Gastrocnemius medialis (tissue), 4 donors: ENCODE measurements at regions of chr5 and their contacts with region 1.

Region 1: DNA sequence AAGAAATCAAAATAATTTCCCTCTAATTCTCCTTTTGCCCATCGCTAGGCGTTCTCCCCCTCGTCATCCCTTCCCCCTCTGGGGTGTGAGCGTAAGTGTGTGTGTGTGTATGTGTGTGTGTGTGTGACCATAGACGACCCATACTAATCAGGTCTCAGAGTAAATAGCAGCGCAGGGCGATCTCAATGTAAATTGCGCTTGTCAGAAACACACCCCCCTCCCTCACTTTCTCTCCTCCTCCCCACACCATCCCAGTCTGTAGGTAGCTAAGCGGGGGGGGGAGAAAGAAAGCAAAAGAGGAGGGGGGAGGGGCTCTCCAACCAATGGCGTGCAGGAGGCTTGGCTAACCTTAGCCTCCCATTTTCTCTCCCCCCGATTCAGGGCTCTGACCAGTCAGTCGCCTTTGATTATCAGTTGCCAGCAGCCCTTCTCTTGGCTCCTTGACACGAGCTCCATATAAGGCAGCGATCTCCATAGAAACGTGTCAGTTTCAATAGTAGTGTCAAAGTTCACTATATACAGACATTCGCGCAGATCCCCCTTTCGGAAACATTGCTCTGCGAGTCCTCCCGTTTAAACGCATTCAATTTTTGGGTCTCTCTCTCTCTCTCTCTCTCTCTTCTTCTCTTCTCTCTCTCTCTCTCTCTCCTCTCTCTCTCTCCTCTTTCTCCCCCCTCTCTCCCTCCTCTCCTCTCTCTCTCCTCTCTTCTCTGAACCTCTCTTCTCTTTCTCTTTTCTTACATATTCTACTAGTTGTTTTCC is at the start of gene NR2F1:
- DNase-seq: no peak
- ATAC-seq: no peak
- H3K4me3 ChIP-seq: peak within 1 kb of the TSS; percentile 40 to 69 (median 52)
- H3K27ac ChIP-seq: no peak within 1 kb of the TSS
- H3K4me1 ChIP-seq: peaks cover 26 to 37% of the 10 kb centered on the region in 2 donors
- H3K27me3 ChIP-seq: peaks cover 79 to 85% (median 81%) of the 10 kb centered on the region in 3 donors
- CTCF ChIP-seq: peak in 2 of 5 experiments; percentile 59 to 66
- POLR2A ChIP-seq: no peak
- total RNA-seq, gene NR2F1: 0.36 to 0.55 TPM in 2 of 4 donors, not detected in the others

Region 2: DNA sequence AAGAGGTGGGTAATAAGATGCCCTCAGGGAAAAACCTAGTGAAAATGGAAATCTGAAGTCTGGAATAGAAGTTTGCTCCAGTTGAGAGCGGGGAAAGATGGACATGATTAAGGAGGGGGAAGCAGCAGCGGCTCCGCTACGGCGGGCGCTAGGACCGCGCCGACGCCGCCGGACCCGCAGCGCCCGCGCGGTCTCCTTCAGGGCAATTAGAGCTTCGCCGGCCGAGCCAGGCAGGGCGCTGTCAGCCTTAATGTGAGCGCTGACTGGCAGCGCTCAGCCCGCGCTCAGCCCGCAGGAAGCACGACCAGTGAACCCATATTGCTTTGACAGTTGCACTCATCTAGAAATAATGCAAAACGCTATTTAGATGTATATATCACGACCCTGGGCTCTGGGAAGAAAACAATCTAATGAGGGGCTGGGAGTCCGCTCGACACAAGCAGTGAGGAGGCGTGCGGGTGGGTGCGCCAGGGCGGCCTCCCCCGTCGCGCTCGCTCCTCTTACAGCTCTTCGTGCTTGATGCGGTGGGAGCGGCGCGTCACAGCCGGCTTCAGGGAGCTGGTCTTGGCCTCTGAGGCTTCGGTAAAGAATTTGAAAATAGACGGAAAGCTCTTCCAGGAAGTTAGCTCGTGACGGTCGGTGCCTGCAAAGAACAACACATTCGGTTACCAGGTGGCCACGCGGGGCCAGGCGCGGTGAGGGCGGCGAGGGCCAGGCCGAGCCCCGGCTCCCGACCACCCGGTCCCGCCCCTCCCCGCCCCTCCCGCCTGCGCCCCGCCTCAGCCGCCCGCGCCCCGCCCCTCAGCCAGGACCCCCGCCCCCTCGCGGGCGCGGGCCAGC is 37.8 kb after region 1 on chr5:
- in situ Hi-C with region 1: no loop called
- intact Hi-C with region 1: loop called (anchors 5 kb)
- DNase-seq: no peak
- ATAC-seq: peak; percentile 75 to 79
- H3K4me3 ChIP-seq: peak overlapping the region; percentile 71 to 81 (median 74)
- H3K27ac ChIP-seq: peak overlapping the region; percentile 58 to 63 (median 60)
- H3K4me1 ChIP-seq: peaks cover 0 to 10% of the 10 kb centered on the region in 2 donors
- H3K27me3 ChIP-seq: peaks cover 0 to 6% (median 6%) of the 10 kb centered on the region in 3 donors
- CTCF ChIP-seq: no peak
- POLR2A ChIP-seq: no peak

Region 3: DNA sequence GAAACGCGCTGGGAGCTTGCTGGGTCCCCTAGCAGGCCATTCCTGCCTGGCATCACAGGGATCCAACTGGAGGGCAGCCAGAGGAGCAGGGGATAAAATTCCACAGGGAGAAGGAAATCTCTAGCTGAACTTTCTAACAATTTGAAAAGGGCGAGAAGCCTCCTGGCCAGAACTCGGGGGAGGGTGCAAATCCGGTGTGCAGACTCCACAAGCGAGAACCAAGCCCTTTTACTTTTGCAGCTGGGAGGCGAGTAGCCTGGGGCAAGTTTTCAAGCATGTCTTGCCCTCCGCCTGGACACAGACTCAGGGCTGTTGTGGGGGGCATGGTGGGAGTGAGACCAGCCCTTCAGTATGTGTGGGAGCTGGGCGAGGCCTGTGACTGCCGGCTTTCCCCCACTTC is 172.9 kb after region 1 on chr5:
- in situ Hi-C with region 1: no loop called
- intact Hi-C with region 1: no loop called
- DNase-seq: no peak
- ATAC-seq: no peak
- H3K4me3 ChIP-seq: no peak overlapping the region
- H3K27ac ChIP-seq: no peak overlapping the region
- H3K4me1 ChIP-seq: no peaks in the 10 kb centered on the region
- H3K27me3 ChIP-seq: no peaks in the 10 kb centered on the region
- CTCF ChIP-seq: no peak
- POLR2A ChIP-seq: no peak

Region 4: DNA sequence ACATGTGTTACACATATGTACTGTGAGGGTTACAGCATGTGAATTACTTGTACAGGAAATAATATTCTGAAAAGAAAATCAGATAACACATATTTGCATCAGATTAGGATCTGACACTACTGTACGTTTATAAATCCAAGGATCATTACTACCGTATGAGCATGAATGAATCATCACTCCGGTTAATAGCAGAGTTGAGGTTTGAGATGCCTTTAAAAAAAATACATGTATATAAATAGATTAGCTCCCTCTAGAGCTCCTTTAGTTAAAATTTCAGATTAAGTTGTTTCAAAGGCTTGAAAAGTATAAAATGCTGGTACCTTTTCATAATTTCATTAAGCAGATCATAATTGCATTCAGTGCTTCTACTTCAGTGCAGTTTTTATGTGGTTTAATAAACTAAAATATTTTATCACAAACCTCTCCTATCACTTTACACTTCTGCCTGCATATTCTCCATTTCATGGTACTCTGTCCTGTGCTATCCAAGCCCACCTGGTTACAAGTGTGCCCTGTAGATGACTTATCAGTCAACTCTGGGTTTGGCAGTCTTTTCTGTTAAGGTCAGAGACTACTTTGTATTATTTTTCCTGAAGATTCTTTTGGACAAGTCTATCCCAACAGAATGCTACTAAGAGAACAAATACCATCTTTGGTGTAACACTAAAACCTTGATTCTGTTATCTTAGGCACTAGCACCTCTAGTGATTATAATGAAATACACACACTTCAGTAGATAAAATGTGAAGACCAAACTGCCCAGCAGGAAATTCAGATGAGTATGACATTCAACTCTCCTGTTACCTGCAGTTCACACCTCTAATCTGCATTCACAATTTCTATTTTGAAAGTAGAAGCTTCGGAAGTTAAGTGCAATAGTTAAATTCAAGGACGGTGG is 206.6 kb after region 1 on chr5:
- in situ Hi-C with region 1: loop called in 1 of 4 experiments (anchors 25 kb)
- intact Hi-C with region 1: no loop called
- DNase-seq: no peak
- ATAC-seq: no peak
- H3K4me3 ChIP-seq: no peak overlapping the region
- H3K27ac ChIP-seq: no peak overlapping the region
- H3K4me1 ChIP-seq: no peaks in the 10 kb centered on the region
- H3K27me3 ChIP-seq: no peaks in the 10 kb centered on the region
- CTCF ChIP-seq: no peak
- POLR2A ChIP-seq: no peak

Region 5: DNA sequence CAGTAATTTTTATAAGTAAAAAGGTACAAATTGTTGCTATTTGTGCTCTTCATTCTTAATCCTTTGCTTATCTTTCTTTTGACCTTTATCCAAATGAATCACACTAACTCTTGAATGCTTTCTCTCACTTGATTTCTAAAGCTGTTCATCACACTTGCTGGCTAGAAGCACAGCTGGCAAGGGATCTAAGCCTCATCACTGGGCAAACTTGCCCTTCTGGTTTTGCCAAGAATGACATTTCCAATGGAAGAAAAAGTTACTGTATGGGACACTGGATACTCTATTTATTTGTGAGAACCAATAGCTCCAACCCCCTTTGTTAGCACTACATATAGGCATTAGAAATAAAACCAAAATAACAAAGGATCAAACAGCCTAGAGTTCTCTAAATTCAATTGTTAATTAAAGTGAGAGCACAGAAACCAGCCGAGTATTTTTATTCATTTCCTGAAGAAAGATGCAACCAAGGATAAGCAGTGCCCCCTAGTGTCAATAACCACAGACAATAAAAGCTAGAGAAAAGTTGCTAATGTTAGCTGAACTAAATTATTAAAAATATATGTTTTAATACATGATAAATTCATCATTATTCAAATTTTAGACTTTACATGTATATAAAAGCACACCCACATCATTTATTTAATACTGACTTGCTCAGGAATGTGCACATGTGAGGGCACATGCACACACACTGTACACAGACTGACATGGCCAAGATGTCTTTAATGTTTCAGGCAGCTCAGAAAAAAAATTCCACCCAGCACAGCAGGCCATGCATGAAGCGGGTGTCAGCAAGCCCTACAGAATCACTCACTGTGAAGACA is 218.3 kb after region 1 on chr5:
- in situ Hi-C with region 1: loop called in 1 of 4 experiments (anchors 25 kb)
- intact Hi-C with region 1: loop called (anchors 1 kb)
- DNase-seq: no peak
- ATAC-seq: no peak
- H3K4me3 ChIP-seq: no peak overlapping the region
- H3K27ac ChIP-seq: no peak overlapping the region
- H3K4me1 ChIP-seq: no peaks in the 10 kb centered on the region
- H3K27me3 ChIP-seq: no peaks in the 10 kb centered on the region
- CTCF ChIP-seq: peak; percentile 16 to 69 (median 42)
- POLR2A ChIP-seq: no peak

Region 6: GRCh38 chr5:93915142-93915553 is 332.3 kb after region 1 on chr5:
- in situ Hi-C with region 1: loop called in 2 of 4 experiments (anchors 10 to 25 kb)
- intact Hi-C with region 1: loop called (anchors 5 kb)
- DNase-seq: no peak
- ATAC-seq: no peak
- H3K4me3 ChIP-seq: no peak overlapping the region
- H3K27ac ChIP-seq: no peak overlapping the region
- H3K4me1 ChIP-seq: no peaks in the 10 kb centered on the region
- H3K27me3 ChIP-seq: no peaks in the 10 kb centered on the region
- CTCF ChIP-seq: peak; percentile 20 to 60 (median 46)
- POLR2A ChIP-seq: no peak

Region 7: GRCh38 chr5:94094793-94095441 is 512.1 kb after region 1 on chr5:
- in situ Hi-C with region 1: no loop called
- intact Hi-C with region 1: no loop called
- DNase-seq: no peak
- ATAC-seq: no peak
- H3K4me3 ChIP-seq: no peak overlapping the region
- H3K27ac ChIP-seq: no peak overlapping the region
- H3K4me1 ChIP-seq: no peaks in the 10 kb centered on the region
- H3K27me3 ChIP-seq: no peaks in the 10 kb centered on the region
- CTCF ChIP-seq: no peak
- POLR2A ChIP-seq: no peak

Region 8: GRCh38 chr5:94736498-94736897 is 1153.6 kb after region 1 on chr5:
- in situ Hi-C with region 1: no loop called
- intact Hi-C with region 1: loop called (anchors 5 kb)
- DNase-seq: no peak
- ATAC-seq: no peak
- H3K4me3 ChIP-seq: no peak overlapping the region
- H3K27ac ChIP-seq: no peak overlapping the region
- H3K4me1 ChIP-seq: no peaks in the 10 kb centered on the region
- H3K27me3 ChIP-seq: no peaks in the 10 kb centered on the region
- CTCF ChIP-seq: no peak
- POLR2A ChIP-seq: no peak